ENCODE measurements at regions of chr10 and their contacts with region 1.

Region 1: GRCh38 chr10:102420810-102421644 is at the start of gene FBXL15:
- DNase-seq: peak; percentile 96
- H3K4me3 ChIP-seq: peak within 1 kb of the TSS; percentile 64 to 73 (median 70)
- H3K27ac ChIP-seq: no peak within 1 kb of the TSS
- H3K4me1 ChIP-seq: peaks cover 20% of the 10 kb centered on the region
- H3K27me3 ChIP-seq: peaks cover 3 to 7% of the 10 kb centered on the region in 2 experiments
- CTCF ChIP-seq: no peak
- POLR2A ChIP-seq: peak; percentile 27
- total RNA-seq, gene FBXL15: 9.9 and 10.7 TPM in 2 replicates

Region 2: GRCh38 chr10:102167861-102168260 is 253.2 kb before region 1 on chr10:
- CTCF ChIA-PET with region 1: interaction called, 37 read pairs
- POLR2A ChIA-PET with region 1: interaction called, 4 read pairs
- dilution Hi-C with region 1: no loop called
- intact Hi-C with region 1: loop called (anchors 1 kb)
- DNase-seq: no peak
- H3K4me3 ChIP-seq: no peak overlapping the region
- H3K27ac ChIP-seq: no peak overlapping the region
- H3K4me1 ChIP-seq: no peaks in the 10 kb centered on the region
- H3K27me3 ChIP-seq: no peaks in the 10 kb centered on the region
- CTCF ChIP-seq: no peak
- POLR2A ChIP-seq: no peak

Region 3: GRCh38 chr10:102399217-102400089 is 21.6 kb before region 1 on chr10:
- CTCF ChIA-PET with region 1: interaction called, 51 read pairs
- POLR2A ChIA-PET with region 1: no interaction called
- dilution Hi-C with region 1: no loop called
- intact Hi-C with region 1: loop called (anchors 1 kb)
- DNase-seq: peak; percentile 82
- H3K4me3 ChIP-seq: peak overlapping the region in 2 of 3 experiments; percentile 15 to 48
- H3K27ac ChIP-seq: no peak overlapping the region
- H3K4me1 ChIP-seq: peaks cover 13% of the 10 kb centered on the region
- H3K27me3 ChIP-seq: no peaks in the 10 kb centered on the region
- CTCF ChIP-seq: peak; percentile 93 to 96
- POLR2A ChIP-seq: no peak

Region 4: GRCh38 chr10:102450194-102450938 is 29.3 kb after region 1 on chr10:
- CTCF ChIA-PET with region 1: interaction called, 17 read pairs
- POLR2A ChIA-PET with region 1: no interaction called
- dilution Hi-C with region 1: no loop called
- intact Hi-C with region 1: loop called (anchors 1 kb)
- DNase-seq: peak; percentile 70
- H3K4me3 ChIP-seq: peak overlapping the region; percentile 61 to 81 (median 69)
- H3K27ac ChIP-seq: no peak overlapping the region
- H3K4me1 ChIP-seq: peaks cover 3% of the 10 kb centered on the region
- H3K27me3 ChIP-seq: no peaks in the 10 kb centered on the region
- CTCF ChIP-seq: no peak
- POLR2A ChIP-seq: peak; percentile 79

Region 5: DNA sequence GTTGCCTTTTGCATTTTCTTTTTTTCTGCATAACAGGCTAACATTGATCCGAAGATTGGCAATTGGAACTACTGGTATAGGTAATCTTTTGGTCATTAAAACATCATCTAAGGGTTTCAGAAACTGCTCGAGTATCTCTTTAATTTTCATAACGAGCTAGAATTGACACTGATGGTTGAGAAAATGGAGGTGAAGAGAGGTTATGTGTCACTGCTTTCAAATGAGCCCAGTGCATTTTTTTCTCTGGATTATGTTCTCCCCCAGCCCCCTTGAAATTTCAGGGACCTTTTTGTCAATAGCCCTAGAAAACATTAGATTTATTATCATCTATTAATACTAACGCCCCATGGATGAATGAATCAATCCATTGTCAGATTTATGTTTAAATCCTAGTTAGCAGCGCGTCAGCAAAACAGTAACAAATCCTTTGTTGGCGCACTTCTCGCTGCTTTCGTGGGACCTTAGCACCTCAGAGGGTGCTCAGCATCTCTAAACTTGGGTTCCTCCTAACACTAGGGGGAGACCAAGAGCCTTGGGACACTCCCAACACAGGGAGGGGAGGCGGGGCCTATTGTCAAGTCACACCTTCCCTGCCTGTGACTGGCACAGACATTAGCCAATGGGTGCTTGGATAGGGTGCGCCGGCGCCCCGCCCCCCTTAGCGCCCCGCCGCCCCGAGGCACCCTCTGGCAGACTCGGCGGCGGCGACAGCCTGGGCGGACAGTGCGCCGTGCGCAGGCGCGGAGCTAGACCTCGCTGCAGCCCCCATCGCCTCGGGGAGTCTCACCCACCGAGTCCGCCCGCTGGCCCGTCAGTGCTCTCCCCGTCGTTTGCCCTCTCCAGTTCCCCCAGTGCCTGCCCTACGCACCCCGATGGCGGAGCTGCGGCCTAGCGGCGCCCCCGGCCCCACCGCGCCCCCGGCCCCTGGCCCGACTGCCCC is 82.5 kb after region 1 on chr10 and contains the start of gene SUFU:
- CTCF ChIA-PET with region 1: no interaction called
- POLR2A ChIA-PET with region 1: interaction called, 3 read pairs
- dilution Hi-C with region 1: no loop called
- intact Hi-C with region 1: loop called (anchors 5 kb)
- DNase-seq: peak; percentile 99
- H3K4me3 ChIP-seq: peak within 1 kb of the TSS; percentile 68 to 87 (median 76)
- H3K27ac ChIP-seq: peak within 1 kb of the TSS; percentile 52
- H3K4me1 ChIP-seq: peaks cover 16% of the 10 kb centered on the region
- H3K27me3 ChIP-seq: no peaks in the 10 kb centered on the region
- CTCF ChIP-seq: peak; percentile 89 to 91
- POLR2A ChIP-seq: peak; percentile 86
- total RNA-seq, gene SUFU: 14.5 and 16.3 TPM in 2 replicates

Region 6: DNA sequence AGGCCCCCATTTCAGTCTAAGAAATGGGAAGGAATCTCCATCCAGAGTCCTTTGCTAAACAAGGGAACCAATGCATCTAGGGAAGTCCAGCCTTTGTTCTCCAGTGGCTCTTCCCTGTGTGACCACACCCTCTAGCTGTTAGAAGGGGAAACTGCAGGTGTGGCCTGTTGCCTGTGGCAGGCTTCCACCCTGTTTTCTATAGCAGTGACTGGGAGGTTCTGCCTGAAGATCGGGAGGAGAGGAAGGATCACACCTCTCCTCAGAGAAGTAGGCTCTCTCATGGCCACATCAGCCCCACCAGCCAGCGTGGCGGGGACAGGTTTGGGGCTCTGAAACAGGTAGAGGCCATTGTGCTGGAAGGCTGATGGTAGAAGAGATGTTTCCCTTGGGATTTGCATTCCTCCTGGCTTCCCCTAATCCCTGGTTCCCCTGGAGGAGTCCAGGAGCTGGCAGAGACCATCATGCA is 175.5 kb after region 1 on chr10:
- CTCF ChIA-PET with region 1: no interaction called
- POLR2A ChIA-PET with region 1: no interaction called
- dilution Hi-C with region 1: no loop called
- intact Hi-C with region 1: loop called (anchors 5 kb)
- DNase-seq: peak; percentile 74
- H3K4me3 ChIP-seq: no peak overlapping the region
- H3K27ac ChIP-seq: peak overlapping the region; percentile 92
- H3K4me1 ChIP-seq: peaks cover 64% of the 10 kb centered on the region
- H3K27me3 ChIP-seq: no peaks in the 10 kb centered on the region
- CTCF ChIP-seq: peak; percentile 79
- POLR2A ChIP-seq: no peak

Region 7: DNA sequence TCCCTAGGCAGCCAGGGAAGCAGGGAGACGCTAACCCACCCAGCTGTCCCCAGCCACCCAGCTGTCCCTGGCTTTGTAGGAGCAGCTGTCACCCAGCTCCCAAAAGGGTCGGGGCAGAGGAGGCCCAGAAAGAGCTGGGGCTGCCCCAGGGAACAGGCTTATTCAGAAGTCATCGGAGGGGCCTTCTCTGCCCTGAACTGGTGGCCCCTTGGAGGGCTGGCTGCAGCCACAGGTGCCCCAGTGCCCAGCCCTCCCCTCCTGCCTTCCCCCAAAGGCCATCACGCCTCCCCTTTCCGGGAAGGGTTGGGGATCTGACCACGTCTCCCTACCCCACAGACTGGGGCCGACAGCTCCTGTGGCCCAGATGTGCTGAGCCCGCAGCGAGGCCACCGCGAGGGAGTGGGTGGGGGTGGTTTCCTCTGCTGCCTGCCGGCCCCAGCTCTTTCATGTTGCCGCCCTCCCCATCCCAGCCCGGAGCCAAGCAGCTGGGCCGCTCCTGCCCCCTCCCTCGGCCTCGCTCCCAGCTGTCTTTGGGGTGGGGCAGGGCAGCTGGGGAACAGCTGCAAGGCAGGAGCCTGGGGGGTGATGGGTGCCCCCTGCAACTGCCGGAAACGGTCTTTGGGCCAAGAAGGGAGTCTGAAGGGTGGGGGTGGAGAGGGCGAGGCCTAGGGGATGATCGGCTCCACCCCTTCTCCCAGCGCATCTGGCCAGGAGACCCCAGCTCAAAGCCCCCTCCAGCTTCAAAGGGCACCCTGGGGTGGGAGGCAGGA is 240.0 kb after region 1 on chr10:
- CTCF ChIA-PET with region 1: no interaction called
- POLR2A ChIA-PET with region 1: interaction called, 11 read pairs
- dilution Hi-C with region 1: no loop called
- intact Hi-C with region 1: no loop called
- DNase-seq: no peak
- H3K4me3 ChIP-seq: no peak overlapping the region
- H3K27ac ChIP-seq: no peak overlapping the region
- H3K4me1 ChIP-seq: peaks cover 18% of the 10 kb centered on the region
- H3K27me3 ChIP-seq: no peaks in the 10 kb centered on the region
- CTCF ChIP-seq: no peak
- POLR2A ChIP-seq: no peak